ENCODE measurements at regions of chr2 and their contacts with region 1.

Region 1: DNA sequence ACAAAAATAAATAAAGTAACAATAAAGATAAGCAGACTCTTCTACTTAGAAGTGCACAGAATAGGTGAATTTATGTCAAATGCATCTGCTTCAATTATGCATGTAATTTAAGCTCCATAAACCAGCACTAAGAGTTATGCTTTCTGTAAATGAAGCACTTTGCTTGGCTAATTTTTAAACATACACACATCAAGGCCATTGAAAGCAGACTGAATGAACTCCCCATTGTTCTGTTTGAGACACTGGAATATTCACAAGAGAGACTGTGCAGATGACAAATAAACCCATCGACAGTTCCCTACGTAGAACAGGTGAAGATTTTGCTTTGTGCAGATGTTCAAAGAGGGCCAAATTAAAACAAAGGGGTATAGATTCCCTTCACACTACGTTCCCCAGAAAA is 133.4 kb downstream of the PID1 start:
- DNase-seq: no peak

Region 2: GRCh38 chr2:229273723-229274338 is 136.2 kb after region 1 on chr2:
- intact Hi-C with region 1: loop called in 1 of 2 experiments (anchors 5 kb)
- DNase-seq: no peak